Heart right ventricle (tissue), 16 donors: ENCODE measurements at regions of chr22 and their contacts with region 1.

Region 1: DNA sequence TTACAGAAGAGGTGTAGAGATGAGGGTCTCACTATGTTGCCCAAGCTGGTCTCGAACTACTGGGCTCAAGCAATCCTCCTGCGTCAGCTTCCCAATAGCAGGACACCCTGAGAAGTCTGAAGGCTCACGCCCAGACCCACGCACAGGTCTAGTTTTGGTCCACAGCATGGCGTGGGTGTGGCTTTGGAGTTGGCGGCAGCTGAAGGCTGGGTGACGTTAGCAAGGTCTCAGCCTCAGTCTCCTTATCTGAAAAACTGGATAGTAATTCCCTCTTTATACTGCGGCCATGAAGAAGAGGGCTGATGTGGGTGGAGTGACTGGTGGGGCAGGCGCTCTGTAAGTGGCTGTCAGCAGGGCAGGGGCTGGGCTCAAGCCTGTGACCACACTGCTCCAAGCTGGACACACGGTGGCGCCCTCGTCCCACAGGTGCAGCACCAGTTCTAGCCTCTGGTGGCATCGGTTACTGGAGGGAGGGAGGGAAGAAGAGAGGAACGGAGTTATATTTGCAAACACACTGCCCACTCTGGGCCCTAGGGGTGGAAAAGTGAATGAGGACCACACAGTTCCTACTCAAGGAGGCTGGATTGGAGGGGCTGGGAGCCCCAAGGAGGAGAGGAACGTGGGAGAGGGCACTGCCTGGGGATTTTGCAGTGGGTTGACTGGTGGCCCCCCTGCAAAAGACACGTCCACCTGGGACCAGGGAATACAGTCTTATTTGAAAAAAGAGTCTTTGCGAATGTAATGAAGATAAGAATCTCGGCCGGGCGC is 19.6 kb upstream of the CARD10 start:
- DNase-seq: peak; percentile 94 to 96
- ATAC-seq: peak; percentile 98 to 99 (median 99)
- H3K4me3 ChIP-seq: peak overlapping the region in 5 of 10 donors; percentile 8 to 17 (median 14)
- H3K27ac ChIP-seq: peak overlapping the region in 2 of 10 donors; percentile 22 to 28
- H3K4me1 ChIP-seq: peaks cover 0 to 24% (median 7%) of the 10 kb centered on the region in 9 donors
- H3K27me3 ChIP-seq: peaks cover 0 to 15% (median 0%) of the 10 kb centered on the region in 7 donors
- CTCF ChIP-seq: peak; percentile 89 to 99 (median 96)

Region 2: GRCh38 chr22:37566903-37567820 is 28.4 kb after region 1 on chr22:
- intact Hi-C with region 1: loop called in 5 of 10 experiments (anchors 1 to 5 kb)
- DNase-seq: peak; percentile 79 to 84
- ATAC-seq: peak; percentile 36 to 81 (median 60)
- H3K4me3 ChIP-seq: no peak overlapping the region
- H3K27ac ChIP-seq: peak overlapping the region in 9 of 10 donors; percentile 17 to 100 (median 96)
- H3K4me1 ChIP-seq: peaks cover 23 to 85% (median 62%) of the 10 kb centered on the region in 9 donors
- H3K27me3 ChIP-seq: peaks cover 0 to 11% (median 0%) of the 10 kb centered on the region in 7 donors
- CTCF ChIP-seq: peak; percentile 87 to 96 (median 94)

Region 3: DNA sequence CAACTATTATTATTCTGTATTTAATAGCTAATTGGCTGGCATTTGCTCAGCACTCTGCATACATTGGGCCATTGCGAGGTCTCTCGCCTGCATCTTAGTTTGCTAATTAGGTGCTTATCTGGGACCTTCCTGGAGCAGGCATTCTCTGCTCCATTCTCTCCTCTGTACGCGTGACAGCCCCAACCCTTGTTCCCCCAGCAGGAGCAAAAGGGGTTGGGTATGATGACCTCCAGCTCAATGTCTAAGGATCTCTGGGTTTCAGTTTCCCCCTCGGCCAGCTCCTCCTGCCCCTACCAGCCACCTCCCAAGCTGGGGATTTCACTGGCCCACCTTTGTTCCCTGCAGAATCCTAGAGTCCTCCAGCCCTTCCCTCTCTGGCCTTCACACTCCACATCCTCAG is 50.9 kb after region 1 on chr22:
- intact Hi-C with region 1: loop called (anchors 1 to 5 kb)
- DNase-seq: no peak
- ATAC-seq: no peak
- H3K4me3 ChIP-seq: no peak overlapping the region
- H3K27ac ChIP-seq: peak overlapping the region in 1 of 10 donors; percentile 70
- H3K4me1 ChIP-seq: peaks cover 0 to 27% (median 3%) of the 10 kb centered on the region in 9 donors
- H3K27me3 ChIP-seq: no peaks in the 10 kb centered on the region
- CTCF ChIP-seq: no peak

Region 4: DNA sequence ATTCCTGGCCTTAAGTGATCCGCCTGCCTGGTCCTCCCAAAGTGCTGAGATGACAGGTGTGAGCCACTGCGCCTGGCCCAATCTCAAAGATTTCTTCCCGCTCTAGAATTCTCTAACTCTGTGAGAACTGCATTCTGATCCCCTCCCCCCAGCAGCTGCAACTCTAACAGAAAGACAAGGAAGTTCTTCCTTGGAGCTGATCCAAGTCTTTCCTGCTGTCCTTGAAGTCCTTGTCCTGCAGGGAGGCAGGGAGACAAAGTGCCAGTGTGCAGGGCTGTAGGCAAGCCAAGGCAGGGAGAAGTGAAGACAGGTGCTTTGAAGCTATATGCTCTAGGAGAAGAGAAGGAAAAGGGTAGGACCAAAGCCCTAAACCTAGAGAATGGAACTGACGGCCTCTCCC is 60.4 kb after region 1 on chr22:
- intact Hi-C with region 1: loop called in 3 of 10 experiments (anchors 1 to 5 kb)
- DNase-seq: peak in 1 of 2 donors; percentile 29
- ATAC-seq: peak in 5 of 8 donors; percentile 16 to 33 (median 27)
- H3K4me3 ChIP-seq: no peak overlapping the region
- H3K27ac ChIP-seq: no peak overlapping the region
- H3K4me1 ChIP-seq: peaks cover 0 to 8% (median 0%) of the 10 kb centered on the region in 9 donors
- H3K27me3 ChIP-seq: peaks cover 0 to 9% (median 0%) of the 10 kb centered on the region in 7 donors
- CTCF ChIP-seq: no peak

Region 5: DNA sequence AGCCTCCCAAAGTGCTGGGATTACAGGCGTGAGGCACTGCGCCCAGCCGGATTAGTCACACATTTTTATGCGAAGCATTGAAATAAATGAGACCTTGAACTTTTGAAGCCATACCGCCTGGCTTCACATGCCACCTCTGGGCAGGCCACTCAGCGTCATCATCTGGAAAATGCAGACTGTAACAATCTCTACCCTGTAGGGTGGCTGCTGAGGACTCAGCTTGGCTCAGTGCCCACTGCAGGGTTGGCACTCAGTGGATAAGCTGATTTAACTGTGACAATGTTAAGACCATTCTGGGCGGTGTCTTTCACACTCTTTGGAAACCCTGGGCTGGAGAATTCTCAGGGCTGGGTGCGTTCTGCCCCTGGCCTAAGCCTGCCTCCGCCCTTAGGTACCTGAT is 109.2 kb after region 1 on chr22:
- intact Hi-C with region 1: no loop called
- DNase-seq: no peak
- ATAC-seq: no peak
- H3K4me3 ChIP-seq: no peak overlapping the region
- H3K27ac ChIP-seq: no peak overlapping the region
- H3K4me1 ChIP-seq: peaks cover 0 to 10% (median 0%) of the 10 kb centered on the region in 9 donors
- H3K27me3 ChIP-seq: no peaks in the 10 kb centered on the region
- CTCF ChIP-seq: no peak